ENCODE measurements at regions of chr9 and their contacts with region 1.

Region 1: GRCh38 chr9:106862825-106863720 is at the start of gene ZNF462:
- DNase-seq: peak; percentile 63 to 72
- H3K4me3 ChIP-seq: peak within 1 kb of the TSS; percentile 79
- H3K4me3 Mint-ChIP-seq: peak within 1 kb of the TSS; percentile 89
- H3K27ac Mint-ChIP-seq: peak within 1 kb of the TSS; percentile 64
- H3K4me1 ChIP-seq: 0 out of 2 replicates have a peak, but pooled peaks cover 6% of the 10 kb centered on the region
- H3K4me1 Mint-ChIP-seq: no peaks in the 10 kb centered on the region
- H3K27me3 ChIP-seq: no peaks in the 10 kb centered on the region
- H3K27me3 Mint-ChIP-seq: no peaks in the 10 kb centered on the region
- CTCF ChIP-seq: peak in 1 of 2 experiments; percentile 34
- total RNA-seq, gene ZNF462: 34.5 and 36.8 TPM in 2 replicates

Region 2: DNA sequence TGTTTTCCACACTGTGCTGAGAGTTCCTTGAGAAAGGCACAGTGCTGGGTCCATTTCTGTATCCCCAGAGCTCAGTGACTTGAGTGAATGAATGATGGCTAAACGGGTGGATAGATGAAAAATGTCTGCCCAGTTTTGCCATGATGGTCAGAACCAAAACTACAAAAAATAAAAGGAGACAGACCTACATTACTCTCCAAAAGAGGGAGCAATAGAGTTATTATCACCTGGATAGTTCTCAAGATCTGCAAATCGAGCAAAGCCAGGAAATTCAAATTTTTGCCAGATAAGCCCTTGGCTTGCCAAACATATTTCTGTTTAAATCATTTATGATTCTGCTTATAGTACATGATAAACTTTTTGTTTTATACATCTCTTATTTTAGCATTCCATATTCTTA is 214.3 kb before region 1 on chr9:
- CTCF ChIA-PET with region 1: no interaction called
- POLR2A ChIA-PET with region 1: no interaction called
- intact Hi-C with region 1: loop called (anchors 1 kb)
- DNase-seq: peak in 1 of 2 experiments; percentile 14
- H3K4me3 ChIP-seq: no peak overlapping the region
- H3K4me3 Mint-ChIP-seq: no peak overlapping the region
- H3K27ac Mint-ChIP-seq: no peak overlapping the region
- H3K4me1 ChIP-seq: no peaks in the 10 kb centered on the region
- H3K4me1 Mint-ChIP-seq: no peaks in the 10 kb centered on the region
- H3K27me3 ChIP-seq: no peaks in the 10 kb centered on the region
- H3K27me3 Mint-ChIP-seq: no peaks in the 10 kb centered on the region
- CTCF ChIP-seq: peak; percentile 27 to 38

Region 3: GRCh38 chr9:106717686-106718085 is 145.4 kb before region 1 on chr9:
- CTCF ChIA-PET with region 1: no interaction called
- POLR2A ChIA-PET with region 1: no interaction called
- intact Hi-C with region 1: loop called (anchors 1 kb)
- DNase-seq: peak; percentile 17 to 37
- H3K4me3 ChIP-seq: no peak overlapping the region
- H3K4me3 Mint-ChIP-seq: no peak overlapping the region
- H3K27ac Mint-ChIP-seq: no peak overlapping the region
- H3K4me1 ChIP-seq: peaks cover 10% of the 10 kb centered on the region; the same call in 1 of the 2 replicates
- H3K4me1 Mint-ChIP-seq: no peaks in the 10 kb centered on the region
- H3K27me3 ChIP-seq: no peaks in the 10 kb centered on the region
- H3K27me3 Mint-ChIP-seq: no peaks in the 10 kb centered on the region
- CTCF ChIP-seq: peak in 1 of 2 experiments; percentile 15

Region 4: DNA sequence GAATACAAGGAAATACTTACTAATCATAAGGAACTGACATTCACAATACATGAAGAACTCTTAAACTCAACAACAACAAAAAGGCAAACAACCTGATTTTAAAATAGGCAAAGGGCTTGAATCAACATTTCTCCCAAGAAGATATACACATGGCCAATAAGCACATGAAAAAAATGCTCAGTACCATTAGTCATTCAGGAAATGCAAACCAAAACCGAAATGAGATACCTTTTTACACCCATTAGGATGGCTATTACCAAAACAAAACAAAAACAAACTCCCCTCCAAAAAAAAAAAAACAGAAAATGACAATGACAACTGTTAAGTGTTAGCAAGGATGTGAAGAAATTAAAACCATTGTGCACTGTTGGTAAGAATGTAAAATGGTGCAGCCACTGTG is 104.2 kb before region 1 on chr9:
- CTCF ChIA-PET with region 1: no interaction called
- POLR2A ChIA-PET with region 1: no interaction called
- intact Hi-C with region 1: no loop called
- DNase-seq: no peak
- H3K4me3 ChIP-seq: no peak overlapping the region
- H3K4me3 Mint-ChIP-seq: no peak overlapping the region
- H3K27ac Mint-ChIP-seq: no peak overlapping the region
- H3K4me1 ChIP-seq: peaks cover 17% of the 10 kb centered on the region; the same call in 1 of the 2 replicates
- H3K4me1 Mint-ChIP-seq: peaks cover 15% of the 10 kb centered on the region
- H3K27me3 ChIP-seq: no peaks in the 10 kb centered on the region
- H3K27me3 Mint-ChIP-seq: no peaks in the 10 kb centered on the region
- CTCF ChIP-seq: no peak

Region 5: GRCh38 chr9:106892632-106893031 is 29.6 kb after region 1 on chr9:
- CTCF ChIA-PET with region 1: no interaction called
- POLR2A ChIA-PET with region 1: no interaction called
- intact Hi-C with region 1: loop called (anchors 2 kb)
- DNase-seq: peak; percentile 84 to 90
- H3K4me3 ChIP-seq: no peak overlapping the region
- H3K4me3 Mint-ChIP-seq: peak overlapping the region; percentile 40
- H3K27ac Mint-ChIP-seq: peak overlapping the region; percentile 92
- H3K4me1 ChIP-seq: peaks cover 61% of the 10 kb centered on the region
- H3K4me1 Mint-ChIP-seq: peaks cover 43% of the 10 kb centered on the region
- H3K27me3 ChIP-seq: no peaks in the 10 kb centered on the region
- H3K27me3 Mint-ChIP-seq: no peaks in the 10 kb centered on the region
- CTCF ChIP-seq: no peak

Region 6: DNA sequence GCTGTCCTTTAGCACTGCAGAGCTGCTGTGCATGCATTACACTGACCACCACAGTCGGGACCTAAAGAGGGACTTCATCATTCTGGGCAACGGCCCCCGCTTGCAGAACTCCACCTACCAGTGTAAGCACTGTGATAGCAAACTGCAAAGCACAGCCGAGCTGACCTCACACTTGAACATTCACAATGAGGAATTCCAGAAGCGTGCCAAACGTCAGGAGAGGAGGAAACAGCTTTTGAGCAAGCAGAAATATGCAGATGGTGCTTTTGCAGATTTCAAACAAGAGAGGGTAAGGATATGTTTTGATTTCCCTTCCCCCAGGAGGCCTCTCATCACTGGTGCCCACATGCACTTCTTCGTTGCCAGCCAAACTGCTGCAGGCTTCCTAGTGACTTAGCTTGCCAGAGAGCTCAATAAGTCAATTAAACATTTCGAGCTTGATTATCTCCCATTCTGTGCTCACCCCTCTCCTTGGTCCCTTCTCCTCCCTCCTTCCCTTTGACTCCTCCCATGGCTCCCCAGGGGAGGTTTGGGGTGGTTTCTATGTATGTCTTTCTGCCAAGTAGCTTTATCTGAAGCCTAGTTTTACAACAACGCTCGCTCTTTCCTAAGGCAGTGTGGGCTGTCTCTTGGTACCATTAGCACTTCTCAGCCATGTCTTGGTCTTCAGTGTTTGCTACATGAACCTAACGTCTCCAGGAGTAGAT is 66.6 kb after region 1 on chr9:
- CTCF ChIA-PET with region 1: interaction called, 3 read pairs
- POLR2A ChIA-PET with region 1: no interaction called
- intact Hi-C with region 1: loop called (anchors 2 kb)
- DNase-seq: no peak
- H3K4me3 ChIP-seq: no peak overlapping the region
- H3K4me3 Mint-ChIP-seq: no peak overlapping the region
- H3K27ac Mint-ChIP-seq: peak overlapping the region; percentile 79
- H3K4me1 ChIP-seq: peaks cover 37% of the 10 kb centered on the region
- H3K4me1 Mint-ChIP-seq: peaks cover 43% of the 10 kb centered on the region
- H3K27me3 ChIP-seq: no peaks in the 10 kb centered on the region
- H3K27me3 Mint-ChIP-seq: no peaks in the 10 kb centered on the region
- CTCF ChIP-seq: no peak

Region 7: GRCh38 chr9:107137495-107138202 is 274.6 kb after region 1 on chr9:
- CTCF ChIA-PET with region 1: no interaction called
- POLR2A ChIA-PET with region 1: no interaction called
- intact Hi-C with region 1: loop called (anchors 5 kb)
- DNase-seq: peak in 1 of 2 experiments; percentile 44
- H3K4me3 ChIP-seq: no peak overlapping the region
- H3K4me3 Mint-ChIP-seq: no peak overlapping the region
- H3K27ac Mint-ChIP-seq: no peak overlapping the region
- H3K4me1 ChIP-seq: no peaks in the 10 kb centered on the region; the same call in 1 of the 2 replicates
- H3K4me1 Mint-ChIP-seq: no peaks in the 10 kb centered on the region
- H3K27me3 ChIP-seq: no peaks in the 10 kb centered on the region
- H3K27me3 Mint-ChIP-seq: peaks cover 8% of the 10 kb centered on the region
- CTCF ChIP-seq: peak; percentile 36 to 47